Activated B cell treated with CpG ODN at 0.5 μM for 24 hours (primary cell): ENCODE measurements at regions of chr17 and their contacts with region 1.

Region 1: DNA sequence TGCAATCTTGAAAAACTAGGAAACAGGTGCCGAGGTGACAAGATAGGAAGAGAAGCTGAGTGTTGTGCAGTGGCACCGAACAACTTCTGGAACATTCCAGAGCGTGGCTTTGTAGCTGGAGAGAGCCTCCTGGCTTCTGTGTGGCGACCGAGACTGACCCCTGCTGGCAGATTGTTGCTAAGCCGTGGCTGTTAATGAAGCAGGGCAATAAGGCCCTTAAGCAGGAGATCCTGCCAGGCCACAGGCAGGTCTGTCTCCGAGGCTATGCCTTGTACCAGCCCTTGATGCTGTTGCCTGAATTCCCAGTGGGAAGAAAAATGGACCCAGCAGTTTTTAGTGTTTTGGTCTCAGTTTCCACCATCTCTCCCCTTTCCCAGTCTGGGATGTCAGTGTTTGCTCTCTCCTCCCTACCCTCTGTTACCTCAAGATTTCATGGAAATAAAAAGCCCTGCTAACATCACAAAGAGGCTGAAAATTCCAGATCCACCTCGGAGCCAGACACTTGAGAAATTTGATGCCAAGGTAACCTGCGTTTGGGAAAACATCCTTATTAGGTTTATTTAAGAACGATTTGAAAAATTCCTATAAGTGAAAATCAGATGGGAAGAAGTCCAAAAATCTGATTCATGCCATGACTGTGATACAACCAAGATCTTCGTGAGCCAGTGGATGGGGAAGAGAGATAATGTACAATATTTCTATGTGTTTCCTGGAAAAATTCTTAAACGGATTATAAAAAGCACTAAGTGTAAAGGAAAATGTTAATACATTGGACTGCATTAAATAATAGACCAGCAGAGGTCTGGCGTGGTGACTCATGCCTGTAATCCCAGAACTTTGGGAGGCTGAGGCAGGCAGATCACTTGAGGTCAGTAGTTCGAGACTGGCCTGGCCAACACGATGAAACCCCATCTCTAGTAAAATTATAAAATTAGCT is 265.1 kb downstream of the PRKCA start:
- DNase-seq: peak; percentile 54
- ATAC-seq: peak; percentile 58
- H3K4me3 Mint-ChIP-seq: no peak overlapping the region
- H3K27ac Mint-ChIP-seq: no peak overlapping the region
- H3K4me1 Mint-ChIP-seq: no peaks in the 10 kb centered on the region
- H3K27me3 Mint-ChIP-seq: no peaks in the 10 kb centered on the region
- CTCF ChIP-seq: peak; percentile 45

Region 2: DNA sequence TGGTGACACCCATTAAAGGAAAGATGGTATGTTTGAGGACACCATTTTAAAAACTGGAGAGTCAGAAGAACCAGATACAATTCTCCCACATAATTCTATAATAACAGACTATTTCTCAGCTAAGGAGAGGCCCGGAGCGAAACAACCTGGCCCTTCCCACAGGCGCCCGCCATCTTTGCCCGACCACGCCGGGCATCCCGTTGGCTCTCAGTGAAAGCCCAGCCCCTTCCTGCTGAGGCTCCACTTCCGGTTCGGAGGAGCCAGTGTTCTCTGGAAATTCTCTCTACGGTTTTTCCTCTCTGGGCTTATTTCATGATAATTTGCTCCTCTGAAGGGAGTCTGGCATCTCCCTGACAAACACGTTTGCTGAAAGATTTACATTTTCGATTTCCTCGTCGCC is 1181.8 kb before region 1 on chr17:
- CTCF ChIA-PET with region 1: no interaction called
- POLR2A ChIA-PET with region 1: no interaction called
- intact Hi-C with region 1: no loop called
- DNase-seq: no peak
- ATAC-seq: no peak
- H3K4me3 Mint-ChIP-seq: no peak overlapping the region
- H3K27ac Mint-ChIP-seq: no peak overlapping the region
- H3K4me1 Mint-ChIP-seq: no peaks in the 10 kb centered on the region
- H3K27me3 Mint-ChIP-seq: peaks cover 4% of the 10 kb centered on the region
- CTCF ChIP-seq: no peak

Region 3: DNA sequence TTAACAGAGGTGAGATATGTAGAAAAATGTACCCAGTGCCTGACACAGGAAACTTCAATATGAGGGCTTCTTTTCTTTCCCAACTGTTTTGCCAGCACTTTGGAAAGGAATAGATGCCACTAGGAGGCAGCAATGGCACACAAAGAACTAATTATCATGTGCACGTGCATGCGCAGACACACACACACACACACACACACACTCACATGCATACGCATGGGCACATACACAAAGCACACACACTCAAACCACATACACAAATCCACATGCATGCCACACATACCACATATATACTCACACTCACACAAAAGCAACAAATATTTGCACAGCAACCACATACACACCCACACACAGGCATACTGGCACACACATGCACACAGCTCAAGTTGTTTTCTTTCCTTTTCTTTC is 366.8 kb before region 1 on chr17:
- CTCF ChIA-PET with region 1: interaction called, 4 read pairs
- POLR2A ChIA-PET with region 1: no interaction called
- intact Hi-C with region 1: loop called (anchors 2 kb)
- DNase-seq: no peak
- ATAC-seq: no peak
- H3K4me3 Mint-ChIP-seq: no peak overlapping the region
- H3K27ac Mint-ChIP-seq: no peak overlapping the region
- H3K4me1 Mint-ChIP-seq: no peaks in the 10 kb centered on the region
- H3K27me3 Mint-ChIP-seq: no peaks in the 10 kb centered on the region
- CTCF ChIP-seq: no peak

Region 4: DNA sequence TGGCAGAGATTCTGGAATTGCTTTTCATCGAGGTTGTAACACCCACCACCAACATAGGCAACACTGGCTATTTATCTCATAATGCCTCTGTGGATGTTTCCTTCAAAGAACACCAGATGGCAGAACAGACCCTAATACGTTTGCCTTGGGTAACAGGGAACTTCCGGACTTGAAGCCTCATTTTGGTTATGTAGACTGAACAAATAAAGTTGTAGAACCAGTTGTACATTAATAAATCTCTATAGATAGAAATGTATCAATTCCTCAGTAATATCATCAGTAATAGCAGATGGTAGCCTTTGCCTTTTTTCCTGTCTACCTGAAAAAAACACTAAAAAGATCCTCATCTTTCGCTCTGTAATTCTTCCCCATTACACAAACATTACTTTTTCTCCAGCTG is 312.4 kb before region 1 on chr17:
- CTCF ChIA-PET with region 1: interaction called, 28 read pairs
- POLR2A ChIA-PET with region 1: no interaction called
- intact Hi-C with region 1: loop called (anchors 1 kb)
- DNase-seq: no peak
- ATAC-seq: peak; percentile 49
- H3K4me3 Mint-ChIP-seq: no peak overlapping the region
- H3K27ac Mint-ChIP-seq: no peak overlapping the region
- H3K4me1 Mint-ChIP-seq: no peaks in the 10 kb centered on the region
- H3K27me3 Mint-ChIP-seq: no peaks in the 10 kb centered on the region
- CTCF ChIP-seq: no peak

Region 5: GRCh38 chr17:66508896-66509843 is 58.3 kb before region 1 on chr17:
- CTCF ChIA-PET with region 1: no interaction called
- POLR2A ChIA-PET with region 1: no interaction called
- intact Hi-C with region 1: no loop called
- DNase-seq: no peak
- ATAC-seq: no peak
- H3K4me3 Mint-ChIP-seq: no peak overlapping the region
- H3K27ac Mint-ChIP-seq: no peak overlapping the region
- H3K4me1 Mint-ChIP-seq: no peaks in the 10 kb centered on the region
- H3K27me3 Mint-ChIP-seq: no peaks in the 10 kb centered on the region
- CTCF ChIP-seq: no peak